HCT116 (cell line): ENCODE measurements at regions of chr17 and their contacts with region 1.

Region 1: DNA sequence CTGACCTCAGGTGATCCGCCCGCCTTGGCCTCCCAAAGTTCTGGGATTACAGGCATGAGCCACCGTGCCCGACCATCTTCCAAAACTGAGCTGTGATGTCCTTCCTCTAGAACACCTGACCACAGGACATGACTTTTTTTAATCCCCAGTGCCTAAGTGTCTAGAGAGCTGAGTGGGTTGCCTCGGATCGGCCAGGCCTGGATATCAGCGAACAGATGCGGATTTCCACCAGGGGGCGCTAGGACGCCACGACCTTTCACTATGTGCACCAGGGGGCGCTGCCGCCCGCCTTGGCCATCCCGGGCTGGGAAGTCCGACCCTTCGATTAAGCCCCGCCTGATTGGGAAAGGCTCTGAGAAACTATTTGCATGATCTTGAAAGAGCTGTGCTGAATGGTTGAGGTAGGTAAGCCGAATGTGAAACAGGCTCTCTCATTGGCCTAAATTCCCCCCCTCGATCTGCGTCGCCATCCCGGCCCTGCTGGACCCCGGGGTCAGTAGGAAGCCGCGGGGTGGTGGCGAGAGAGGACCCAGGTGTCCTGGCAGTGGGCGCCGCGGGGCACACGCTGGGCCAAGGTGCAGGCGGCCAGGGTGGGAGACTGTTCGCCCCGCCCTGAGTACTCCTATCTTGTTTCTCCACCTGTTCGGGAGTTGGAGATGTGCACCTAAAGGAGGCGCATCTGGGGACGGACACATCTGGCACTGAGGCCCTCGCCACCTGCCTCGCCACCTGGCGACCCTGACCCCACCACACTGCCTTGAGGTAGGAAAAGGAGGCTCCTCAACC is at the start of gene ACBD4:
- DNase-seq: peak; percentile 96
- ATAC-seq: peak; percentile 73
- H3K4me3 ChIP-seq: peak within 1 kb of the TSS; percentile 41 to 50
- H3K27ac ChIP-seq: peak within 1 kb of the TSS; percentile 38; the same call in 1 of the 2 replicates
- H3K4me1 ChIP-seq: peaks cover 16 to 36% of the 10 kb centered on the region in 2 experiments
- H3K27me3 ChIP-seq: no peaks in the 10 kb centered on the region
- CTCF ChIP-seq: peak; percentile 100
- POLR2A ChIP-seq: no peak
- RAD21 ChIP-seq: peak; percentile 100
- total RNA-seq, gene ACBD4: 13.6 TPM

Region 2: DNA sequence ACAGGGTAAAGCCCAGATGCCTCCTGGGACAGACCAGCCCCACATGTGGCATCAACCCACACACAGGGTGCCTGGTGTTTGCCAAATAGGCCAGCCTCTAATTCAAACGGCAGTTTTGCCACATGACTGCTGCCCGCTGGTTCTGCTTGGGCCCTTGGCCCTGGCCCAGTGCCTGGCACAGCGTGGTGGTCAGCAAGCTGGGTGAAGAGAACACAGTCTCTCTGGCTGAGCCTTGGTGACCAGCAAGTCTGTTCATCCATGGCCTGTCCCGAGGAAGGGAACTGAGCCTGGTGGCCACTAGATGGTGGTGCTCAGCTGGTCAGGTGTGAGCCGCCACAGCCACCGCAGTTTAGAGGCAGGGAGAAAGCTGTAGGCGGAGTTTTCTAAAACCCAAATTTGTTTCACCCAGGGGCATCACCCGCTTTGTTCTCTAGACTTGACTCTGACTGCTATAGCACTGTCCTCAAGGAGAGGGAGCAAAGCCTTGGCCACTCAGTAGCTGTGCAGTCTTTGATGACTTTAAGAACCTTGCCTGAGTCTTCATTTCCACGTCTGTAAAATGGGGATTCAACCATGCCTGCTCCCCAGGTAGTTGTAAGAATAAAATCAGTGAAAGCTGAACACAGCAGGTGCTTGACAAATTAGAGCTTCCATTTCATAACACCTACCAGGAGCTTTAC is 215.4 kb before region 1 on chr17:
- CTCF ChIA-PET with region 1: interaction called, 7 read pairs
- POLR2A ChIA-PET with region 1: no interaction called
- RAD21 ChIA-PET with region 1: interaction called in 1 of 2 experiments, 3 read pairs
- intact Hi-C with region 1: loop called (anchors 1 kb)
- DNase-seq: peak; percentile 65
- ATAC-seq: peak; percentile 95
- H3K4me3 ChIP-seq: no peak overlapping the region
- H3K27ac ChIP-seq: no peak overlapping the region
- H3K4me1 ChIP-seq: peaks cover 0 to 18% of the 10 kb centered on the region in 2 experiments; a peak in 2 of 4 replicates
- H3K27me3 ChIP-seq: no peaks in the 10 kb centered on the region
- CTCF ChIP-seq: peak; percentile 87 to 93 (median 87)
- POLR2A ChIP-seq: no peak
- RAD21 ChIP-seq: peak; percentile 96

Region 3: DNA sequence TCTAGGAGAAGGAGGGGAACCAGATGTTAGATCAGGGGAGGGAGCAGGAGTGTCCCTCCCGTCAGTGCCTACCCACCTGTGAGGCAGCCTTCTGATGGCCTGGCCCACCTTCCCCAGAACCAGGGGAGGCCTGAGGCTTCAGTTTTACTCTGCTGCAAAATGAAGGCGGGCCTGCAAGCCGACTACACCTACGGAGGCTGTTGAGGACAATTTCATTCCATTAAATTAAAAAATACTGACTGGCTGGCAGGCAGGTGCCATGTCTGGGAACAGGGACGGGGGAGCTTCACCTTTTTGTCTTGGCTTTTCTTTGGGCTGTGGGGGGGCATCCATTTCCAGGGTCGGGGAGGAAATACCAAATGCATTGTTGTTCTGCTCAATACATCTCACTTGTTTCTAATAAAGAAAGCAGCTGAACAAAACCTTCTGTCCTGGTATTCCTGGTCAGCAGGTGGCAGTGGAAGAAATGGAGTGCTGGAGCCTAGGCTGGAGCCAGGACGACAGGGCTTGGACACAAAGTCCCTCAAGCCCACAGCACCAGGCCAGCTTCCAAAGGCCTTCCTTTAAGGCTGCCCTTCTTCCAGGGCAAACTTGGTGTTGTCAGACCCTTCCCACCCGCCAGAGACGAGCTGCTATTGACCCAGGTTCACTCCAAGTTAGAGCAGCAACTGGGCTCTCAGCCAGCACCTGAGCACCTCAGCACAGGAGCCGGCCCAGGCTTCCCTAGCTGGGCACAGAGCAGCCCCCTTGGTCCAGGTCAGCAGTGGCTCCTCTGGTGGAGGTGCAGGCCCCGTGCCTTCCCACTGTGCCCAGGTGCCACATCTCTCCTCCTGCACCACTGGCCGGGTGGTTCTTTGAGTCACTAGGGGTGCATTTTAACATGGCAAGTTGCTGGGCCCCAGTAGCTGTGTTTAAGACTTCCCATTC is 26.5 kb before region 1 on chr17:
- CTCF ChIA-PET with region 1: interaction called, 13 read pairs
- POLR2A ChIA-PET with region 1: no interaction called
- RAD21 ChIA-PET with region 1: no interaction called
- intact Hi-C with region 1: loop called (anchors 1 kb)
- DNase-seq: no peak
- ATAC-seq: peak; percentile 45
- H3K4me3 ChIP-seq: no peak overlapping the region
- H3K27ac ChIP-seq: peak overlapping the region; percentile 21; the same call in 1 of the 2 replicates
- H3K4me1 ChIP-seq: peaks cover 3 to 10% of the 10 kb centered on the region in 2 experiments; a peak in 2 of 4 replicates
- H3K27me3 ChIP-seq: no peaks in the 10 kb centered on the region
- CTCF ChIP-seq: peak; percentile 22 to 63 (median 26); a peak in 3 of 6 replicates
- POLR2A ChIP-seq: no peak
- RAD21 ChIP-seq: peak; percentile 78

Region 4: GRCh38 chr17:45161019-45161825 is 25.8 kb after region 1 on chr17:
- CTCF ChIA-PET with region 1: interaction called, 15 read pairs
- POLR2A ChIA-PET with region 1: no interaction called
- RAD21 ChIA-PET with region 1: no interaction called
- intact Hi-C with region 1: no loop called
- DNase-seq: peak; percentile 100
- ATAC-seq: peak; percentile 93
- H3K4me3 ChIP-seq: peak overlapping the region; percentile 89 to 97
- H3K27ac ChIP-seq: peak overlapping the region; percentile 89
- H3K4me1 ChIP-seq: peaks cover 23 to 35% of the 10 kb centered on the region in 2 experiments
- H3K27me3 ChIP-seq: no peaks in the 10 kb centered on the region
- CTCF ChIP-seq: 0 out of 6 replicates have a peak, but pooled peaks of 1 of the 3 experiments have one; percentile 9
- POLR2A ChIP-seq: peak; percentile 52
- RAD21 ChIP-seq: 0 out of 2 replicates have a peak, but pooled peaks have one; percentile 15

Region 5: GRCh38 chr17:45218895-45219661 is 83.7 kb after region 1 on chr17:
- CTCF ChIA-PET with region 1: interaction called, 23 read pairs
- POLR2A ChIA-PET with region 1: no interaction called
- RAD21 ChIA-PET with region 1: interaction called in 1 of 2 experiments, 4 read pairs
- intact Hi-C with region 1: no loop called
- DNase-seq: peak; percentile 67
- ATAC-seq: peak; percentile 80
- H3K4me3 ChIP-seq: no peak overlapping the region; a peak in 1 of 4 replicates
- H3K27ac ChIP-seq: no peak overlapping the region
- H3K4me1 ChIP-seq: peaks cover 0 to 29% of the 10 kb centered on the region in 2 experiments; a peak in 3 of 4 replicates
- H3K27me3 ChIP-seq: no peaks in the 10 kb centered on the region
- CTCF ChIP-seq: peak; percentile 87 to 96 (median 95)
- POLR2A ChIP-seq: no peak
- RAD21 ChIP-seq: peak; percentile 97

Region 6: GRCh38 chr17:45385331-45385997 is 250.1 kb after region 1 on chr17:
- CTCF ChIA-PET with region 1: interaction called, 10 read pairs
- POLR2A ChIA-PET with region 1: no interaction called
- RAD21 ChIA-PET with region 1: no interaction called
- intact Hi-C with region 1: loop called (anchors 10 kb)
- DNase-seq: peak; percentile 87
- ATAC-seq: peak; percentile 94
- H3K4me3 ChIP-seq: no peak overlapping the region
- H3K27ac ChIP-seq: no peak overlapping the region
- H3K4me1 ChIP-seq: peaks cover 0 to 35% of the 10 kb centered on the region in 2 experiments; a peak in 2 of 4 replicates
- H3K27me3 ChIP-seq: no peaks in the 10 kb centered on the region
- CTCF ChIP-seq: peak; percentile 99 to 100 (median 100)
- POLR2A ChIP-seq: no peak
- RAD21 ChIP-seq: peak; percentile 100